ENCODE measurements at regions of chr20 and their contacts with region 1.

Region 1: DNA sequence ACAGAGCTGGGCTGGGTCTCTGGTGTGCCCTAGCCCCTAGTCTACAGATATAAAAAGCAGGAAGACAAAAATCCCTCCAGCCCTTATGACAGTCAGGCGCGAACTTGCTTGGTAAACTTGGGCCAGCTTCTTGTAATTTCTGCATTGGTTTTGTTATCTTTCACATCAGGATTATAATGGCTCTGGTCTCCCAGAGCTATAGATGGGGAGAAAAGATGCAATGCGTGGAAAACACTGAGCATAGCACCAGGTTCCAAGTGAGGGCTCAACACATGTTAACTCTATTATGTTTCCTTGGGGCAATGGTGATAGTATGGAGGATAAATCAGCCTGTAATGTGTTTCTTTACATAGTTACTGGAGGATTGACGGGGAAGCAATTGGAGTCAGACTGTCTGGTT is 246.8 kb upstream of the KCNG1 start:
- DNase-seq: no peak
- H3K4me3 Mint-ChIP-seq: no peak overlapping the region
- H3K27ac Mint-ChIP-seq: no peak overlapping the region
- H3K4me1 Mint-ChIP-seq: no peaks in the 10 kb centered on the region
- H3K27me3 Mint-ChIP-seq: peaks cover 11% of the 10 kb centered on the region
- CTCF ChIP-seq: no peak

Region 2: GRCh38 chr20:51258582-51259180 is 11.0 kb before region 1 on chr20:
- CTCF ChIA-PET with region 1: interaction called, 5 read pairs
- POLR2A ChIA-PET with region 1: interaction called, 10 read pairs
- intact Hi-C with region 1: no loop called
- DNase-seq: peak; percentile 55
- H3K4me3 Mint-ChIP-seq: no peak overlapping the region
- H3K27ac Mint-ChIP-seq: peak overlapping the region; percentile 89
- H3K4me1 Mint-ChIP-seq: peaks cover 13% of the 10 kb centered on the region
- H3K27me3 Mint-ChIP-seq: no peaks in the 10 kb centered on the region
- CTCF ChIP-seq: no peak

Region 3: GRCh38 chr20:51354769-51355319 is 85.2 kb after region 1 on chr20:
- CTCF ChIA-PET with region 1: no interaction called
- POLR2A ChIA-PET with region 1: no interaction called
- intact Hi-C with region 1: no loop called
- DNase-seq: no peak
- H3K4me3 Mint-ChIP-seq: no peak overlapping the region
- H3K27ac Mint-ChIP-seq: no peak overlapping the region
- H3K4me1 Mint-ChIP-seq: no peaks in the 10 kb centered on the region
- H3K27me3 Mint-ChIP-seq: no peaks in the 10 kb centered on the region
- CTCF ChIP-seq: no peak

Measured in MCF 10A (cell line).